A549 (cell line): ENCODE measurements at regions of chr11 and their contacts with region 1.

Region 1: GRCh38 chr11:46936138-46937110 is at the start of gene CSTPP1:
- DNase-seq: peak; percentile 95 to 99
- ATAC-seq: peak; percentile 99 to 100
- H3K4me3 ChIP-seq: peak within 1 kb of the TSS; percentile 73
- H3K27ac ChIP-seq: peak within 1 kb of the TSS; percentile 80 to 87
- H3K4me1 ChIP-seq: peaks cover 10% of the 10 kb centered on the region; the same call in 2 of the 3 replicates
- CTCF ChIP-seq: no peak
- EP300 ChIP-seq: no peak
- POLR2A ChIP-seq: no peak
- RAD21 ChIP-seq: peak; percentile 7 to 14; a peak in 1 of 5 replicates
- polyA plus RNA-seq, gene CSTPP1: 34.5 and 40.6 TPM in 2 replicates

Region 2: GRCh38 chr11:46889689-46890475 is 46.5 kb before region 1 on chr11:
- CTCF ChIA-PET with region 1: no interaction called
- POLR2A ChIA-PET with region 1: interaction called, 14 read pairs
- DNase-seq: peak; percentile 62 to 75
- ATAC-seq: peak; percentile 90 to 92
- H3K4me3 ChIP-seq: no peak overlapping the region
- H3K27ac ChIP-seq: no peak overlapping the region
- H3K4me1 ChIP-seq: no peaks in the 10 kb centered on the region
- CTCF ChIP-seq: peak; percentile 91
- EP300 ChIP-seq: no peak
- POLR2A ChIP-seq: no peak
- RAD21 ChIP-seq: peak; percentile 91 to 96

Region 3: GRCh38 chr11:46984987-46985386 is 48.6 kb after region 1 on chr11:
- CTCF ChIA-PET with region 1: no interaction called
- POLR2A ChIA-PET with region 1: interaction called, 14 read pairs
- DNase-seq: no peak
- ATAC-seq: 0 out of 6 replicates have a peak, but pooled peaks of 1 of the 2 experiments have one; percentile 37
- H3K4me3 ChIP-seq: no peak overlapping the region
- H3K27ac ChIP-seq: no peak overlapping the region
- H3K4me1 ChIP-seq: peaks cover 22% of the 10 kb centered on the region
- CTCF ChIP-seq: no peak
- EP300 ChIP-seq: no peak
- POLR2A ChIP-seq: no peak
- RAD21 ChIP-seq: no peak